ENCODE measurements at regions of chr13 and their contacts with region 1.

Region 1: DNA sequence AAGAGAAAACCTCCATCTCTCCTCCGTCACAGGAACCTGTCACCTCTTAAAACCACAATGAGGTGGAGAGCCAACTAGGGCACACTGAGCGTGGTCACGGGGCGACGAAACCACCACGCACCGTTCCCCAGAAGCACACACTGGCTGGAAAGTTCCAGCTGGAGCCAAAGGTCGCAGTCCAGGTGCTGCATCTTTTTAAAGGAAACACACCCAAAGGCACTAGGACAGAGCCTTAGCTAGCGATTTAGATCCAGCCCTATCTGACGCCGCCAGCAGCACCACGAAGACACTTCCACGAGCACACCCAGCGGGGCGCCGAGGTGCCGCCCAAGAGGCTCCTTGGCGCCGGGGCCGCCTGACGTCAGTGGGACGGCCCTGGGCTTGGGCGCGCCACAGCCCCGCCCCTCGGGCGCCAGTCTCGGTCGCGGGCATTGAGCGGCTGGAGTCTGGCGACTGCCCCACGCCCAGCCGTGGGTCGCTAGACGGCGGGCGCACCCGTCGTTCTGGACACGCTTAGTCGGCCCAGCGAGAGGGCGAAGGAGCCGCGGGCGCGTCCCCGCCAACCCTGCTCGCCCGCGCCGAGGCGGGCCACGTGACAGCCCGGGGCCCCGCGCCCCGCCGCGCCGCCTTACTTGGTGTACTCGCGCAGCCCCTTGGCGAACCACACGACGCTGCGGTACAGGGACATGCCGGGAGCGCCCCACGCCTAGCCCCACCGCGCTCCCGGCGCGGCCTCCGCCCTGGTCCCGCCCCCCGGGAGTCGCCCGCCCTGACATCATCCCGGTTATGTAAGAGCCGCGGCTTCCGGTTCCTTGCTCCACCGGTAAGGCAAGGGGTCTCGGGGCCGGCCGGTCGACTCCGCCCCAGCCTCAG is at the start of gene DHRS12:
- DNase-seq: peak; percentile 82
- H3K4me3 Mint-ChIP-seq: peak within 1 kb of the TSS; percentile 87
- H3K27ac Mint-ChIP-seq: peak within 1 kb of the TSS; percentile 98
- H3K4me1 Mint-ChIP-seq: peaks cover 33% of the 10 kb centered on the region
- H3K27me3 Mint-ChIP-seq: peaks cover 4% of the 10 kb centered on the region
- total RNA-seq, gene DHRS12: 2.2 and 3.1 TPM in 2 replicates

Region 2: DNA sequence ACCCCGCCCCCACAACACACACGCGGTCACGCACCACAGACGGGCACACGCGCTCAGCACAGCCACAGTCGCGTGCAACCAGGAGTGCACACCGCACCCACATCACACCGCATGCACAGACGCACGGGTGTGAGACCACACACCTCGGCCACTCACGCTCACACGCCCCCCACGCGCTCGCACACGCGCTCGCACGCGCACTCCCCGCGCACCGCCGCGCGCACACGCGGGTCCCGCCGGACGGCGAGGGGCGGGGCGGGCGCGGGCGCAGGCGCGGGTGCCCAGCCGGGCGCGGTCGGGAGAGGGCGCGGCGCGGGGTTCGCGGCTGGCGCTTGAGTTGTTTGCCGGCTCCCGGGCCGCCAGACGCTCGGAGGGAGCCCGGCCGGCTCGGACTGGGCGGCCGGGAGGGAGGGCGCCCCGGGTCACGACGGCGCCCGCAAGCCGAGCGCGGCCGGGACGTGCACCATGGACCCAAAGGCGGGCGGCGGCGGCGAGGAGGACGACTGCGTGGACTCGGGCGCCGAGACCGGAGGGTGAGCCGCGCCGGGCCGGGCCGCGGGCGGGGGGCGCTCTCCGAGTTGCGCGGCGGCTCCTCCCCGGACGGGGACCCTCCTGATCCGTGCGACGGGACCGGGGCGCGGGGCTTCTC is 581.5 kb before region 1 on chr13 and contains the start of gene FAM124A:
- intact Hi-C with region 1: loop called (anchors 5 kb)
- DNase-seq: peak; percentile 29
- H3K4me3 Mint-ChIP-seq: peak within 1 kb of the TSS; percentile 66
- H3K27ac Mint-ChIP-seq: no peak within 1 kb of the TSS
- H3K4me1 Mint-ChIP-seq: no peaks in the 10 kb centered on the region
- H3K27me3 Mint-ChIP-seq: peaks cover 49% of the 10 kb centered on the region
- total RNA-seq, gene FAM124A: 0.59 and 0.64 TPM in 2 replicates

Region 3: DNA sequence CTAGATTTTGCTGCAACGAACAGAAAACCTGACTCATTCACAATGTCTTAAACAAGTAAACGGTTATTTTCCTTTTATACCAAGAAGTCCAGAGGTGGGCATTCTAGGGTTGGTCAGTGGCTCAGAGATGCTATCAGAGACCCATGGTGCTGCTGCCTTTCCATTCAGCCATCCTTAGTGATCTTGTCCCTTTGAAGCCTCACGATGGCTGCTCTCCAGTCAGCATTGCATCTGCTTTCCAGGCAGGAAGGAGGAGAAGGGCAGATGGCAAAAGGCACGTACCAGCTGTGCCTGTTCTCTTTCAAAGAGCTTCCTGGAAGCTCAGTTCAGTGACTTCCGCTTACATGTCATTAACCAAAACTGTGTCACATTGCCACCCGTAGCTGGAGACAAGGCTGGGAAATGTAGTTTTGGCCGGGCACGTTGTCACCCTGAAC is 189.3 kb before region 1 on chr13:
- intact Hi-C with region 1: loop called (anchors 10 kb)
- DNase-seq: peak; percentile 34
- H3K4me3 Mint-ChIP-seq: peak overlapping the region; percentile 82
- H3K27ac Mint-ChIP-seq: peak overlapping the region; percentile 97
- H3K4me1 Mint-ChIP-seq: peaks cover 17% of the 10 kb centered on the region
- H3K27me3 Mint-ChIP-seq: no peaks in the 10 kb centered on the region

Region 4: DNA sequence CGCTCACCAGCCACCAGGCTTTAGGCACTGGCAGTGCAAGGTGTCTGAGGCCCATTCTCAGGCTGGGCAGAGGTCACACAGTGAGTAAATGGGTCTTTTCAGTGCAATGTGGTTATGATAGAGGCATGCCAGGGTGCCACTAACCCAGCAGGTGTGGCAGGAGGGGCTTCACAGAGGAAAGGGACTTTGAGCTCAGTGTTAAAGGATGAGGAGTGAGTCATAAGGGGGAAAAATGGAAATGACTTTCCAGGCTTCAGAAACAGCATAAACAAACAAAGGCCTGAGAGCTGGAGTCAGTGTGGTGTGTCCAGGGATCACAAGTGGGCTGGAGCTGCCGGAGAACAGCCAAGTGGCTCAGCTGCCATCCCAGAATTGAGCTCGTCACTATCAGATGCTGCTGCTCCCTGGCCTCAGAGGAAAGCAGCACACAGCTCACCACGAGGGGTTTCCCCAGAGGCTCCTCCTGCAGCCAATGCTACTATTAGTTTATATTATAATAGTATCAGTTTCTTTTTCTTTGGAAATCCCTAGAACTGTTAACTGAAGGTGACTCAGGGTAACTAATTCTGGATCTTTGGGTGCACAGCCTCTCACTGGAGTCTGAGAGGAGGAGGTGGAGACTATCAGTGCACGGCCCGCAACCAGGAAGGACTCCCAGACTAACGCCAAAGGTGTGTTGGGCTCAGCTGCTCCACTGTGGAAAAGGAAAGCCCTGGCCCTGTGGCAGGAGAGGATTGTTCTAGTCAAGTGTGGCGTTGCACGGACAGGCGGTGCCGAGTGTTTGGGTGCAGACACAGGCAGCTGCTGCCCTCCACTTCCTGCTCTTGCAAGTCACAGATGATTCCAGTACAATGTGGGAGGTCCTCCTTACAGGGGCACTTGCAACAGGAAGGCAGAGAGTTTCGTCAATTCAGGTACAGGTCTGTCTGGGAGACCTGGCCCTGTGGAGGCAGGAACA is 39.2 kb before region 1 on chr13:
- intact Hi-C with region 1: loop called (anchors 1 kb)
- DNase-seq: peak; percentile 47
- H3K4me3 Mint-ChIP-seq: peak overlapping the region; percentile 75
- H3K27ac Mint-ChIP-seq: peak overlapping the region; percentile 95
- H3K4me1 Mint-ChIP-seq: peaks cover 30% of the 10 kb centered on the region
- H3K27me3 Mint-ChIP-seq: no peaks in the 10 kb centered on the region

Region 5: DNA sequence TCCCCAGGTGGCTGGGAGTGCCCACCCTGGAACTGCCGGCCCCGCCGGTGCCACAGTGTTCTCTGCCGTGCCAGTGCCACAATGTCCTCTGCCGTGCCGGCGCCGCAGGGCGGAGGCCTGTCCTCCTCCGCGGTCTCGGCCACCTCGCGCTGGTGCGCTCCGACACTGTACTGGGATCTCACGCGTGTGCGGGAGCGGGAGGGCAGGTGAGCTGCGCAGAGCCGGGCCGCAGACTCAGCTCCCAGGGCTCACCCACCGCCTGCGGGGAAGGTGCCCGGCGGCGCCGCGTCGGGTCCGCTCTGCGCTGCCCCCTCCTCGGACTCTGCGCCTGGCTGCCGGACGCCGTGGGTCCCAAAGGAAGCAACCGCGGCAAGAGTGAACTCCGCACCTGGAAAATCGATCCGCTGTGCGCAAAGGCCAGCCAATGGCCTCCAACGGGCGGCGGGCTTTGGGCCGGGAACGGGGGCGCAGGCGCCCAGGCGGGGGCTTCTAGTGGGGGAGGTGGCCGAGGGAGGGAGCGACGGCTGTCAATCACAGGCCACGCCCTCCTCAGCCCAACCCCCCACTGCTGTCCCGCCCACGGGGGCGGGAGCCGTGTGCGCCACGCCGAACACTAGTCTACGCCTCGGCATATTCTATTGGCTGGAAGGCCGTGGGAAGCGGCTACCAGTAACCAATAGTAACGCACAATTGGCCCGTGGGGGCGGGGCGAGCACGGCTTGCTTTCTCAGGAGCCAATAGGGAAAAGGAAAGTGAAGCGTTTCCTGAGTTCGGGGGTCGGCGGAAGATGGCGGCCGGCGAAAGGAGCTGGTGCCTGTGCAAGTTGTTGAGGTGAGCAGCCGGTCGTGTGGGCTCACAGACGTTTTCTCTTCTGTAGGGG is 208.2 kb after region 1 on chr13 and contains the start of gene ALG11:
- intact Hi-C with region 1: loop called (anchors 5 kb)
- DNase-seq: peak; percentile 99
- H3K4me3 Mint-ChIP-seq: peak within 1 kb of the TSS; percentile 94
- H3K27ac Mint-ChIP-seq: peak within 1 kb of the TSS; percentile 86
- H3K4me1 Mint-ChIP-seq: peaks cover 9% of the 10 kb centered on the region
- H3K27me3 Mint-ChIP-seq: peaks cover 35% of the 10 kb centered on the region
- total RNA-seq, gene ALG11: 21.5 and 21.9 TPM in 2 replicates